Ascending aorta (tissue), 2 donors: ENCODE measurements at regions of chr14 and their contacts with region 1.

Region 1: DNA sequence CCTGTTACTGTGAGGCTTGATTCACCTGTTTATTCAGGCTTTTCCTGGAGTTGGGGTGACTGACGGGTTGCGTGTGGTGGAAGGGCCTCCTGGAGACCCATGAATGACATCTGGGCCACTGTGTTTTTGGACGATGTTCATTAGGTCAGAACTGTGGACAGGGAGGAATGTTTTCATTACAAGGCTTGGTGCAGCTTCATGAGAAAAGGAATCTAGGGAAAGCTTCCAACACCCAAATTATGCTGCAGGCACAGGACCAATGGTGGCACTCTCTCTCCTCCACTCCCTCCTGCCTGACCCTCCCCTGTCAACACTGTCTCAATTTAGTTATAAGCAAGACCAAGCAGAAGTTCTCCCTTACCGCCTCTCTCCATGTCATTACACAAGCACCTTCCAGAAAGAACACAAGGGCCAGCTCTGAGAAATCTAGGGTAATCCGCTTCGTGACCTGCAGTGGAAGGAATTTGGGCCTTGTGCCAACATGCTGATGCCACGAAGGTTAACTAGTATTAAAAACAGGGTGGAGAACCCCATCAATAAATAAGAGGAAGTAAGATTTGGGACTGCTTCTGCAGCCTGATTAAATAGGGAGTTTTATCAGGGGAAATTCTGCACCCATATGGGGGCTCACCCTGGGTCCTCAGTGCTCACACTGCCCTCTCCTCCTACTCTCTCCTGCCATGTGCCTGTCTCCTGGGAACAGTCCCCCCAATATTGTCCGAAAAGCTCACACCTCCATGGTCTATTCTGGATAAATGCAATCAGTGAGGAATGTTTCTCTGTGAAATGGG is 200.3 kb downstream of the KTN1 start:
- DNase-seq: peak in 1 of 2 donors; percentile 82
- H3K4me3 ChIP-seq: peak overlapping the region in 1 of 2 donors; percentile 5
- H3K27ac ChIP-seq: peak overlapping the region; percentile 46 to 70
- H3K4me1 ChIP-seq: peaks cover 0 to 15% of the 10 kb centered on the region in 2 donors
- H3K27me3 ChIP-seq: no peaks in the 10 kb centered on the region
- CTCF ChIP-seq: no peak

Region 2: DNA sequence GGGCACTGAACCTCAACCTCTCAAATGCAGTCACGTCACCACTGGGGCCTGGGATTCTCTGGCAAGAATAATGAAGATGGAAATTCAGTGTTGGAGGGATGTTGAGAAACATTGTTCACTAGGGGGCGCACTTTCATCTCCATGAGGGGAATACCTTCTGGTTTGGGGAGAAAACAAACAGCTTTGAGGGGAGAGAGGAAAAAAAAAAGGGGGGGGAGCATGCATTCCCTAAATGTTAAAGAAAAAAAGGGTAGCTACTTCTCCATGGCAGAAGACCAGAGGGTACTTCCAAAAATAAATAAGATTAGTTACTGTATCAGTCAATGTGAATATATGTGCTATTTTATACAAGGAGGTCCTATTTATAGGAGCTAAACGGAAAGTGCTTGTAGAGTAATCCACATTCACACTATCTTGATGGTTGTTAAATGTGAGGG is 334.1 kb before region 1 on chr14:
- intact Hi-C with region 1: loop called (anchors 5 kb)
- DNase-seq: peak in 1 of 2 donors; percentile 71
- H3K4me3 ChIP-seq: no peak overlapping the region
- H3K27ac ChIP-seq: no peak overlapping the region
- H3K4me1 ChIP-seq: no peaks in the 10 kb centered on the region
- H3K27me3 ChIP-seq: no peaks in the 10 kb centered on the region
- CTCF ChIP-seq: peak in 2 of 3 experiments; percentile 42 to 60

Region 3: GRCh38 chr14:55739960-55740648 is 40.2 kb before region 1 on chr14:
- intact Hi-C with region 1: loop called (anchors 1 kb)
- DNase-seq: peak in 1 of 2 donors; percentile 72
- H3K4me3 ChIP-seq: no peak overlapping the region
- H3K27ac ChIP-seq: peak overlapping the region; percentile 26 to 61
- H3K4me1 ChIP-seq: peaks cover 0 to 14% of the 10 kb centered on the region in 2 donors
- H3K27me3 ChIP-seq: no peaks in the 10 kb centered on the region
- CTCF ChIP-seq: no peak